ENCODE measurements at regions of chr5 and their contacts with region 1.

Region 1: GRCh38 chr5:110738812-110739651 is at the start of gene SLC25A46:
- DNase-seq: peak; percentile 76 to 96 (median 88)
- ATAC-seq: peak; percentile 79
- H3K4me3 ChIP-seq: peak within 1 kb of the TSS; percentile 69 to 91
- H3K4me3 Mint-ChIP-seq: peak within 1 kb of the TSS; percentile 96
- H3K27ac ChIP-seq: peak within 1 kb of the TSS; percentile 88 to 97
- H3K27ac Mint-ChIP-seq: peak within 1 kb of the TSS; percentile 97
- H3K4me1 ChIP-seq: peaks cover 15% of the 10 kb centered on the region
- H3K4me1 Mint-ChIP-seq: peaks cover 34% of the 10 kb centered on the region
- H3K27me3 ChIP-seq: no peaks in the 10 kb centered on the region
- H3K27me3 Mint-ChIP-seq: no peaks in the 10 kb centered on the region
- CTCF ChIP-seq: no peak
- total RNA-seq, gene SLC25A46: 13.6 to 14.6 TPM

Region 2: DNA sequence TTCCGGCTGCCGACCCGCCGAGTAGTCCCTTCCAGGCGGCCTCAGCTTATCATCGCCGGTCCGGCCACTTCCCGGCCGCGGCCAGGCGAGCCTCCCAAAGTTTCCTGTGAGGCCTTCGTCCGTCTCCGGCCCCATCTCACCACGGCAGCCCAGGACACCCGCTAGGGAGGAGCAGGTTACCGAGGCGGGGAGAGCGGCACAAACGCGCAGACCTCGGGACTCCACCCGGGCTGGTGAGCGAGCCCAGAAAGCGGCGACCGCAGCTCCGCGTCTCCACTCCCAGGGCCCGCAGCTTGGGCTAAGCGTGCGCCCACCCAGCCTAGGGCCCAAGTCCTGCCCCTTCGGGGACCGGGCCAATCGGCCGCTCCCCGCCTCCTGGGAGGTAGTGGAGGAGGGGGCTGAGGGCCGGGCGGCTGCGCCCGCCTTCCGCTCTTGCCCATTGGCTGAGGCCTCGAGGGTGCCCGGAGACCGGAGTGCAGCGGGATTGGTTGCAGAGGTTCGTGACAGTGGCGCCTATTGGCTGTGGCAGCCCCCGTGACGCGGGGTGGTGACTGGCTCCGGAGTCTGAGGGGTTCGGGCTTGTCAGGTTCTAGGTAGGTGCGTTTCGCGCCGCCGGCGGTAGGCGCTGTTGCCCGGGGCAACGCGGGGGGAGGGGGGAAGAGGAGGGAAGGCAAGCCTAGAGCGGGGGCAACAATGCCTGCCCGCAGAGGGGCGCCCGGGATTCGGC is 1990.5 kb before region 1 on chr5:
- CTCF ChIA-PET with region 1: no interaction called
- POLR2A ChIA-PET with region 1: no interaction called
- intact Hi-C with region 1: loop called (anchors 1 to 5 kb)
- DNase-seq: peak; percentile 95 to 99 (median 98)
- ATAC-seq: peak; percentile 90
- H3K4me3 ChIP-seq: peak overlapping the region; percentile 86 to 98
- H3K4me3 Mint-ChIP-seq: peak overlapping the region; percentile 87
- H3K27ac ChIP-seq: peak overlapping the region; percentile 82 to 88
- H3K27ac Mint-ChIP-seq: peak overlapping the region; percentile 96
- H3K4me1 ChIP-seq: no peaks in the 10 kb centered on the region
- H3K4me1 Mint-ChIP-seq: peaks cover 12% of the 10 kb centered on the region
- H3K27me3 ChIP-seq: no peaks in the 10 kb centered on the region
- H3K27me3 Mint-ChIP-seq: peaks cover 2% of the 10 kb centered on the region
- CTCF ChIP-seq: no peak

Region 3: GRCh38 chr5:110054240-110054639 is 684.8 kb before region 1 on chr5:
- CTCF ChIA-PET with region 1: no interaction called
- POLR2A ChIA-PET with region 1: no interaction called
- intact Hi-C with region 1: loop called (anchors 10 kb)
- DNase-seq: peak; percentile 46 to 95 (median 71)
- ATAC-seq: peak; percentile 93
- H3K4me3 ChIP-seq: no peak overlapping the region
- H3K4me3 Mint-ChIP-seq: peak overlapping the region; percentile 24
- H3K27ac ChIP-seq: peak overlapping the region in 1 of 2 experiments; percentile 44
- H3K27ac Mint-ChIP-seq: peak overlapping the region; percentile 85
- H3K4me1 ChIP-seq: peaks cover 29% of the 10 kb centered on the region
- H3K4me1 Mint-ChIP-seq: peaks cover 43% of the 10 kb centered on the region
- H3K27me3 ChIP-seq: no peaks in the 10 kb centered on the region
- H3K27me3 Mint-ChIP-seq: no peaks in the 10 kb centered on the region
- CTCF ChIP-seq: peak; percentile 62

Region 4: GRCh38 chr5:110681109-110681508 is 57.9 kb before region 1 on chr5:
- CTCF ChIA-PET with region 1: no interaction called
- POLR2A ChIA-PET with region 1: no interaction called
- intact Hi-C with region 1: no loop called
- DNase-seq: no peak
- ATAC-seq: no peak
- H3K4me3 ChIP-seq: no peak overlapping the region
- H3K4me3 Mint-ChIP-seq: no peak overlapping the region
- H3K27ac ChIP-seq: no peak overlapping the region
- H3K27ac Mint-ChIP-seq: no peak overlapping the region
- H3K4me1 ChIP-seq: no peaks in the 10 kb centered on the region
- H3K4me1 Mint-ChIP-seq: no peaks in the 10 kb centered on the region
- H3K27me3 ChIP-seq: no peaks in the 10 kb centered on the region
- H3K27me3 Mint-ChIP-seq: peaks cover 14% of the 10 kb centered on the region
- CTCF ChIP-seq: no peak

Region 5: DNA sequence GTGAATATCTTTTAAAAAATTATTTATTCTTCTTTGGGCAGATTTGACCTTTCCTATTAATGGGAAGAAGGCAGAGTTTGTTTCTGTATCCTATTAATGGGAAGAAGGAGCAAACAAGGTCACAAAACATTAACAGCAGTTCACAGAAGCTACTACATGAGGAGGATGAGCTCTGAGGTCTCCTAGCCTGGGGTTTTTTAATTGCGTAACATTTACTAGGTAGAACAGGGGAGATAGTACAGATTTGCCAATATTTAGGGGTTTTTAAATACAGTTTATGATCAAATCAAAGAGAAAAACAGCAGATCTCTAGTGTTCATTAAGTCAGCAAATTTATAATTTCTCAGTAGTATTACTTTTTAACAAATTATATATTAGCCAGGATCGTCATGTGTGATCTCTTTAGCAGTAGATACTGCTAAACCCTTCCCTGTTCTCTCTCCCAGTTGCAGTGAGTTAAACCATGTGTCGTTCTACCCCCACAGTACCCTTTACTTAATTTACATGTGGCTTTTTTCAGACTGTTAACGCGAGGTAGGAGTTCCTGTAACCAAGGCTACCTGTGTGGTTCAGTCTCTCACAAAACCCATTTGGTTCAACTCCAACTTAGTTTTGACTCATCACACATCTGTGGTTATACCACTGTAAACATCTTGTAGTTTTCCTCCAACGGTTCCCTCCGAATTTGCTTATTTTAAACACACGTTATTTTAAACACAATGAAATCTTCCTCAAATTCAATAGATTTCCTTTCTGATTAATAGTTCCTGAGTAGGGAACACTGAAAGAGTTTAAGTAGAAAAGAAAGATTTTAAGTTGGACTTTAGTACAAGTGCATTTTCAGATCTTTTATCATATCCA is 13.1 kb after region 1 on chr5:
- CTCF ChIA-PET with region 1: interaction called, 6 read pairs
- POLR2A ChIA-PET with region 1: interaction called, 3 read pairs
- intact Hi-C with region 1: loop called in 1 of 2 experiments (anchors 1 kb)
- DNase-seq: peak in 5 of 9 experiments; percentile 15 to 71 (median 36)
- ATAC-seq: peak; percentile 87
- H3K4me3 ChIP-seq: no peak overlapping the region
- H3K4me3 Mint-ChIP-seq: no peak overlapping the region
- H3K27ac ChIP-seq: peak overlapping the region in 1 of 2 experiments; percentile 12
- H3K27ac Mint-ChIP-seq: peak overlapping the region; percentile 83
- H3K4me1 ChIP-seq: no peaks in the 10 kb centered on the region
- H3K4me1 Mint-ChIP-seq: peaks cover 39% of the 10 kb centered on the region
- H3K27me3 ChIP-seq: no peaks in the 10 kb centered on the region
- H3K27me3 Mint-ChIP-seq: no peaks in the 10 kb centered on the region
- CTCF ChIP-seq: no peak

Region 6: DNA sequence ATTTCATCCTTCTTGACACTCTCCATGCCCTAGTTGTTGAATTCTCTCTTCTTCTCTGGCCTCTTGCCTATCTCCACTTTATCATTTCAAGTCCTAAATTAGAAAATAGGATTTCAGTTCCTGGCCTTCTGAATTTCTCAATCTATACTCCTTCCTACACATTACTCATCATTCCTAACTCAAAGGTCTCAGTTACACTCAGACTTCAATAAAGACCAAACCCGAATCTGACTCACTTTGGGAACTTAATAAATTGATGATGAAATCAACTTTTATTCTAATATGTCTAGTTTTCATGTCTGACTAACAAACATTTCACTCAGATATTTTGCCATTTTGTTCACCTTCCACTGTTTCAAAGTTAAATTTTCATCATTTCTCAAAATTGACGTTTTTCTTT is 218.9 kb after region 1 on chr5:
- CTCF ChIA-PET with region 1: no interaction called
- POLR2A ChIA-PET with region 1: no interaction called
- intact Hi-C with region 1: no loop called
- DNase-seq: no peak
- ATAC-seq: no peak
- H3K4me3 ChIP-seq: no peak overlapping the region
- H3K4me3 Mint-ChIP-seq: no peak overlapping the region
- H3K27ac ChIP-seq: no peak overlapping the region
- H3K27ac Mint-ChIP-seq: no peak overlapping the region
- H3K4me1 ChIP-seq: no peaks in the 10 kb centered on the region
- H3K4me1 Mint-ChIP-seq: no peaks in the 10 kb centered on the region
- H3K27me3 ChIP-seq: no peaks in the 10 kb centered on the region
- H3K27me3 Mint-ChIP-seq: peaks cover 8% of the 10 kb centered on the region
- CTCF ChIP-seq: no peak

Region 7: GRCh38 chr5:111211341-111211740 is 472.3 kb after region 1 on chr5:
- CTCF ChIA-PET with region 1: no interaction called
- POLR2A ChIA-PET with region 1: no interaction called
- intact Hi-C with region 1: no loop called
- DNase-seq: no peak
- ATAC-seq: no peak
- H3K4me3 ChIP-seq: no peak overlapping the region
- H3K4me3 Mint-ChIP-seq: peak overlapping the region; percentile 50
- H3K27ac ChIP-seq: no peak overlapping the region
- H3K27ac Mint-ChIP-seq: no peak overlapping the region
- H3K4me1 ChIP-seq: peaks cover 6% of the 10 kb centered on the region
- H3K4me1 Mint-ChIP-seq: peaks cover 6% of the 10 kb centered on the region
- H3K27me3 ChIP-seq: no peaks in the 10 kb centered on the region
- H3K27me3 Mint-ChIP-seq: no peaks in the 10 kb centered on the region
- CTCF ChIP-seq: no peak

Region 8: DNA sequence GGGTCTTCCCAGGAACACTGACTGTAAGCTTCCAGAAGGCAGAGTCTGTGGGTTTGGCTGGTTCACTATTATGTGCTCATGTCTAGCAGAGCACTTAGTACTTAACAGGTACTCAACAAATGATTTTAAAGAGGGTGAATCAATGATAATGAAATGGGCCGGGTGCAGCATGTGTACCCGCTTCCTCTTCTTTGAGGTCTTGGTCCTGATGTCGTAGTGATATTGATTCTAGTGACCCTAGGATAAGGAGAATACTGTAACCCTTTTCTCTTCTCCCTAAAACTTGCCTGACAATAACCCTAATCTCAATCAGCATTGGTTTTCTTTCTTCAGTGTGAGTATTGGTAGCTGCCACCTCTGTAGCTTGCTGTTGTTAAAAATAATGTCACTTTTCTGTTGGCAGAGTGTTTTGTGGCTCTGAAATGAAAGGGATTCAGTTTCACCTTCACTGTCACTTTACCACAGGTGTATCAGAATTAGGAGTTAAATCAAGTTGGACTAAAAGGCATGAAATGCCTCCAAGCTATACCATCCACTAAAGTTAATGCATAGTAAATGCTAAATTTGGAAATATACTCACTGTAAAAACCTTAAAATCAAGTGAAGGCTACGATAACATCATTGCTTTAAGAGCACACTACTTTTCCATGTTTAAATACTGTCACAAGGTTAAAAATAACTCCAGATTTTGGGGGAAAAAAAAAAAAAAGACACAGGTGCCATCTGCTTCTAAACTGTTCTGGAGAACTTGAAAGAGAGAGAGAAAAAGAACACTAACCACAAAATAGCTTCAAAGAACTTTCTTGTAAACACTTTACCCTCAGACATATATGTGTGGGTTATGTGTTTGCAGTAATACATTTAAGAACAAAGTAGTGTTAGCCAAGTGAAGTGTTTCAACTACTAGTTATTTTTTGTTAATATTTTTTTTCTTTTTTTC is 491.1 kb after region 1 on chr5:
- CTCF ChIA-PET with region 1: no interaction called
- POLR2A ChIA-PET with region 1: no interaction called
- intact Hi-C with region 1: loop called in 1 of 2 experiments (anchors 10 kb)
- DNase-seq: peak in 2 of 9 experiments; percentile 67 to 83
- ATAC-seq: peak; percentile 36
- H3K4me3 ChIP-seq: peak overlapping the region; percentile 4 to 46
- H3K4me3 Mint-ChIP-seq: peak overlapping the region; percentile 79
- H3K27ac ChIP-seq: peak overlapping the region; percentile 31 to 72
- H3K27ac Mint-ChIP-seq: peak overlapping the region; percentile 99
- H3K4me1 ChIP-seq: peaks cover 75% of the 10 kb centered on the region
- H3K4me1 Mint-ChIP-seq: peaks cover 74% of the 10 kb centered on the region
- H3K27me3 ChIP-seq: no peaks in the 10 kb centered on the region
- H3K27me3 Mint-ChIP-seq: no peaks in the 10 kb centered on the region
- CTCF ChIP-seq: no peak

Region 9: DNA sequence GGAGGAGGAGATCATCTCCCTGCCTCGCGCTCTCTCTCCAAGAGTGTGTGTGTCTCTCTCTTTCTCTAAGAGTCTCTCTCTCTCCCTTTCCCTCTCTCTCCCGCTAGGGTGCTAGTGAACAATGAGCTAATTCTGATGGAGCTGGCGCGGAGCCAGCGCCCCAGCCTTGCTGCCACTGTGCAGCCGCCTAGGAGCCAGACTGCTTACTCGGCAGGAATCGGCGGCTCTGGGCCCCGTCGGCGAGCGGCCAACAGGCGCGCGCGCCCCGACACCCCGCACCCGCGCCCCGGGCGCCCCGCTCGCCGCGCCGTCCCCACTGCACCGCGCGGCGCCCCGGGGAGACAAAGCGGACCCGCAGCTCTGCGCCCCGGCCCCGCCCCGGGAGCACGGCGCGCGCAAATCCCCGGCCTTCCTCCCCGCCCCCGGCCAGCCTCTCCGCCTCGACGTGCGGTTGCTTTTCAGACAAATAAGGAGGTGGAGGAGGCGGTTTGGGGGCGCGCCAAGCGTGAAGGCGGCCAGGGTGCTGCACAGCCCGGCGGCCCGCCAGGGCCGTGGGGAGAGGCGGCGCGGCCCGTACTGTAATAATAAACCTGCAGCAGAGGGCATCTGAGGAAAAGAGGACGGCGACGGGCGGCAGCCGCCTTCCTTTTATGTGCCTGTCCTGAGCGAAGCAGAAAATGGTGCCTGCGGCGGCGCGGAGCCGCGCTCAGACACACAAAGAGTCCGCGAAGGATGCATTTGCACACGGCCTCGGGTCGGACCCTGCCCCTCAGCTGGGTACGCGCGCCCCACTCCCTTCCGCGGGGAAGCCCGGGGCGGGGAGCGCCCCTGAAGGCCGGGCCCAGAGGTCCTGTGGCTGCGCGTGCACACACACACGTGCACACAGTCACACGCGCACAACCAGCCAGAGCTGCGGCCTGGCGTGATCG is 1018.6 kb after region 1 on chr5:
- CTCF ChIA-PET with region 1: no interaction called
- POLR2A ChIA-PET with region 1: no interaction called
- intact Hi-C with region 1: loop called in 1 of 2 experiments (anchors 5 kb)
- DNase-seq: peak; percentile 39 to 89 (median 81)
- ATAC-seq: peak; percentile 81
- H3K4me3 ChIP-seq: peak overlapping the region; percentile 59 to 88
- H3K4me3 Mint-ChIP-seq: peak overlapping the region; percentile 90
- H3K27ac ChIP-seq: peak overlapping the region; percentile 51 to 74
- H3K27ac Mint-ChIP-seq: peak overlapping the region; percentile 90
- H3K4me1 ChIP-seq: peaks cover 13% of the 10 kb centered on the region
- H3K4me1 Mint-ChIP-seq: peaks cover 21% of the 10 kb centered on the region
- H3K27me3 ChIP-seq: no peaks in the 10 kb centered on the region
- H3K27me3 Mint-ChIP-seq: no peaks in the 10 kb centered on the region
- CTCF ChIP-seq: no peak

Region 10: GRCh38 chr5:112707187-112708102 is 1968.4 kb after region 1 on chr5:
- CTCF ChIA-PET with region 1: no interaction called
- POLR2A ChIA-PET with region 1: no interaction called
- intact Hi-C with region 1: loop called in 1 of 2 experiments (anchors 5 kb)
- DNase-seq: peak; percentile 91 to 99 (median 96)
- ATAC-seq: peak; percentile 92
- H3K4me3 ChIP-seq: peak overlapping the region; percentile 83 to 99
- H3K4me3 Mint-ChIP-seq: peak overlapping the region; percentile 92
- H3K27ac ChIP-seq: peak overlapping the region; percentile 75 to 84
- H3K27ac Mint-ChIP-seq: peak overlapping the region; percentile 92
- H3K4me1 ChIP-seq: peaks cover 43% of the 10 kb centered on the region
- H3K4me1 Mint-ChIP-seq: peaks cover 57% of the 10 kb centered on the region
- H3K27me3 ChIP-seq: no peaks in the 10 kb centered on the region
- H3K27me3 Mint-ChIP-seq: no peaks in the 10 kb centered on the region
- CTCF ChIP-seq: no peak

Measured in CD8-positive, alpha-beta T cell (primary cell).